ENCODE measurements at regions of chr20 and their contacts with region 1.

Region 1: GRCh38 chr20:14337400-14338171 is at the start of gene FLRT3:
- DNase-seq: peak; percentile 32
- CTCF ChIP-seq: peak; percentile 61

Region 2: GRCh38 chr20:14142171-14142570 is 195.4 kb before region 1 on chr20:
- in situ Hi-C with region 1: no loop called
- DNase-seq: peak; percentile 22
- CTCF ChIP-seq: peak; percentile 23

Region 3: GRCh38 chr20:14744723-14745122 is 407.1 kb after region 1 on chr20:
- in situ Hi-C with region 1: no loop called
- DNase-seq: peak; percentile 24
- CTCF ChIP-seq: no peak

Region 4: GRCh38 chr20:15236812-15237211 is 899.2 kb after region 1 on chr20:
- in situ Hi-C with region 1: loop called (anchors 25 kb)
- DNase-seq: peak; percentile 36
- CTCF ChIP-seq: peak; percentile 45